SK-N-SH (cell line): ENCODE measurements at regions of chr15 and their contacts with region 1.

Region 1: DNA sequence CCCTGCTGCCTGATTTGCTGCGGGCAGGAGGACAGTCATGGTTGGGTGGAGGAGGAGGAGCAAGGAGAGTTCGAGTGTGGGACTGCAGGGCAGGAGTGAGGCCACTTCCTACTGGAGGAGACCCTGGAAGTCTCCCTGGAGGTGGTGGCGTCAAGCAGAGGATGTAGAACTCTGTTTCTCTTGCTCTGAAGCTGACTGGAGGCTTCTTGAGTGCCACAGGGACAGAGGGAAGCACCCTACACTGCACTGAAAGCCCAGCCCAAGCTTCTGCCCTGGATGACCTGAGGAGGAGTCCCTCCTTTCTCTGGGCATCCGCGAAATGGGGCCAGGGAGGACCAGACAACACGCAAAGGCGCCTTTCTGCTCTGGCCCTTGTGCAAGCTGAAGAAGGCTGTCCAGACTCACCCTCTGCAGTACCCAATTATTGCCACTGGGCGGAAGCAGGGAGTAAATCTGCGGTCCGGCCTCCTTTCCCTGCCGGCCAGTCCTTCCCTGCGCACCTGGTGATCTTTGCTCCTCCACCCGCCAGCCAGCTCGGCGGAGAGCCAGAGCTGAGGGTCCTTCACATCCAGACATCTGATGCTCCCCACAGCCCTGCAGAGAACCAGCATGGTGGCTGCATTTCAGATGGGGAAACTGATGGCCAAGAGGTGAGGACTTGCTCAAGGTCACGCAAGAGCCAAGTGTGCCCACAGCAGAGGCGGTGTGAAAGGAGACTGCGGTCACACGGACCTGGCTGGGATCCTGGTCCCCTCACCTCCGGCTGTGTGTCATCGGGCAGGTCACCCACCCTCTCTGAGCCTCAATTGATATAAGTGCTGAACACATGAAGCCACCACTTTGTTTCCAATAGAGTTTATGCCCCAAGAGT is 207.1 kb downstream of the TBC1D2B start:
- DNase-seq: peak; percentile 81
- H3K4me3 ChIP-seq: peak overlapping the region in 1 of 2 experiments; percentile 17; a peak in 1 of 4 replicates
- H3K27ac ChIP-seq: no peak overlapping the region
- H3K4me1 ChIP-seq: peaks cover 5 to 7% of the 10 kb centered on the region in 2 experiments; a peak in 3 of 4 replicates
- H3K27me3 ChIP-seq: no peaks in the 10 kb centered on the region
- CTCF ChIP-seq: peak; percentile 63
- EP300 ChIP-seq: no peak
- RAD21 ChIP-seq: peak; percentile 65

Region 2: GRCh38 chr15:77659350-77660321 is 210.8 kb before region 1 on chr15:
- CTCF ChIA-PET with region 1: interaction called, 11 read pairs
- POLR2A ChIA-PET with region 1: interaction called, 4 read pairs
- DNase-seq: peak; percentile 91
- H3K4me3 ChIP-seq: no peak overlapping the region
- H3K27ac ChIP-seq: no peak overlapping the region
- H3K4me1 ChIP-seq: peaks cover 0 to 8% of the 10 kb centered on the region in 2 experiments; a peak in 1 of 4 replicates
- H3K27me3 ChIP-seq: peaks cover 20% of the 10 kb centered on the region; the same call in 1 of the 2 replicates
- CTCF ChIP-seq: peak; percentile 46
- EP300 ChIP-seq: no peak
- RAD21 ChIP-seq: peak; percentile 67

Region 3: DNA sequence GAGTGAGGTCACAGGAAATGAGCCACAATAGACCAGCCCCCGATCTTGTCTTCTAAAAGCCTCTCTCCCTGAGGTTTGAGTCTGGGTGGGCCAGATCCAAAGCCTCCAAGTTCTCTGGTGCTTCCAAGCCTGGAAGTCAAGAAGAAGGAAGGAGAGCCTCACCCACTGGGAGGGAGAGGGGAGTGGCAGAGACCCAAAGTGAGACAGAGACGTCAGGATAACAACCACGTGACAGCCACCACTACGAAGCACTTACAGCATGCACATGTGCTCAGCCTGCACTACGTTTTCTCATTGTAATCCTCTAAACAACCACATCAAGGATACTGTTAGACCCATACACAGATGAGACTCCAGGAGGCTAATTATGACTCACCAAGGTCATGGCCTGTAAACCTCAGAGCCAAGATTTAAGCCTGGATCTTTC is 40.4 kb before region 1 on chr15:
- CTCF ChIA-PET with region 1: interaction called, 10 read pairs
- POLR2A ChIA-PET with region 1: no interaction called
- DNase-seq: no peak
- H3K4me3 ChIP-seq: no peak overlapping the region
- H3K27ac ChIP-seq: no peak overlapping the region
- H3K4me1 ChIP-seq: peaks cover 0 to 8% of the 10 kb centered on the region in 2 experiments; a peak in 1 of 4 replicates
- H3K27me3 ChIP-seq: peaks cover 2% of the 10 kb centered on the region; the same call in 1 of the 2 replicates
- CTCF ChIP-seq: no peak
- EP300 ChIP-seq: no peak
- RAD21 ChIP-seq: no peak

Region 4: GRCh38 chr15:77851691-77852090 is 18.7 kb before region 1 on chr15:
- CTCF ChIA-PET with region 1: interaction called, 31 read pairs
- POLR2A ChIA-PET with region 1: no interaction called
- DNase-seq: peak; percentile 81
- H3K4me3 ChIP-seq: no peak overlapping the region
- H3K27ac ChIP-seq: no peak overlapping the region
- H3K4me1 ChIP-seq: peaks cover 0 to 8% of the 10 kb centered on the region in 2 experiments; a peak in 1 of 4 replicates
- H3K27me3 ChIP-seq: peaks cover 43% of the 10 kb centered on the region; the same call in 1 of the 2 replicates
- CTCF ChIP-seq: no peak
- EP300 ChIP-seq: no peak
- RAD21 ChIP-seq: no peak

Region 5: GRCh38 chr15:77858792-77859490 is 11.5 kb before region 1 on chr15:
- CTCF ChIA-PET with region 1: interaction called, 31 read pairs
- POLR2A ChIA-PET with region 1: no interaction called
- DNase-seq: no peak
- H3K4me3 ChIP-seq: no peak overlapping the region
- H3K27ac ChIP-seq: no peak overlapping the region
- H3K4me1 ChIP-seq: no peaks in the 10 kb centered on the region; a peak in 1 of 4 replicates
- H3K27me3 ChIP-seq: peaks cover 36% of the 10 kb centered on the region; the same call in 1 of the 2 replicates
- CTCF ChIP-seq: no peak
- EP300 ChIP-seq: no peak
- RAD21 ChIP-seq: no peak

Region 6: GRCh38 chr15:77901974-77902750 is 31.7 kb after region 1 on chr15:
- CTCF ChIA-PET with region 1: interaction called, 12 read pairs
- POLR2A ChIA-PET with region 1: no interaction called
- DNase-seq: peak; percentile 52
- H3K4me3 ChIP-seq: no peak overlapping the region
- H3K27ac ChIP-seq: no peak overlapping the region
- H3K4me1 ChIP-seq: no peaks in the 10 kb centered on the region; a peak in 1 of 4 replicates
- H3K27me3 ChIP-seq: no peaks in the 10 kb centered on the region
- CTCF ChIP-seq: no peak; the same call in 1 of the 2 replicates
- EP300 ChIP-seq: no peak
- RAD21 ChIP-seq: peak; percentile 12; the same call in 1 of the 2 replicates

Region 7: GRCh38 chr15:77986891-77987764 is 116.7 kb after region 1 on chr15:
- CTCF ChIA-PET with region 1: no interaction called
- POLR2A ChIA-PET with region 1: no interaction called
- DNase-seq: no peak
- H3K4me3 ChIP-seq: no peak overlapping the region
- H3K27ac ChIP-seq: no peak overlapping the region; a peak in 1 of 4 replicates
- H3K4me1 ChIP-seq: peaks cover 0 to 73% of the 10 kb centered on the region in 2 experiments; a peak in 2 of 4 replicates
- H3K27me3 ChIP-seq: no peaks in the 10 kb centered on the region
- CTCF ChIP-seq: no peak
- EP300 ChIP-seq: no peak
- RAD21 ChIP-seq: no peak